ENCODE measurements at regions of chr3 and their contacts with region 1.

Region 1: DNA sequence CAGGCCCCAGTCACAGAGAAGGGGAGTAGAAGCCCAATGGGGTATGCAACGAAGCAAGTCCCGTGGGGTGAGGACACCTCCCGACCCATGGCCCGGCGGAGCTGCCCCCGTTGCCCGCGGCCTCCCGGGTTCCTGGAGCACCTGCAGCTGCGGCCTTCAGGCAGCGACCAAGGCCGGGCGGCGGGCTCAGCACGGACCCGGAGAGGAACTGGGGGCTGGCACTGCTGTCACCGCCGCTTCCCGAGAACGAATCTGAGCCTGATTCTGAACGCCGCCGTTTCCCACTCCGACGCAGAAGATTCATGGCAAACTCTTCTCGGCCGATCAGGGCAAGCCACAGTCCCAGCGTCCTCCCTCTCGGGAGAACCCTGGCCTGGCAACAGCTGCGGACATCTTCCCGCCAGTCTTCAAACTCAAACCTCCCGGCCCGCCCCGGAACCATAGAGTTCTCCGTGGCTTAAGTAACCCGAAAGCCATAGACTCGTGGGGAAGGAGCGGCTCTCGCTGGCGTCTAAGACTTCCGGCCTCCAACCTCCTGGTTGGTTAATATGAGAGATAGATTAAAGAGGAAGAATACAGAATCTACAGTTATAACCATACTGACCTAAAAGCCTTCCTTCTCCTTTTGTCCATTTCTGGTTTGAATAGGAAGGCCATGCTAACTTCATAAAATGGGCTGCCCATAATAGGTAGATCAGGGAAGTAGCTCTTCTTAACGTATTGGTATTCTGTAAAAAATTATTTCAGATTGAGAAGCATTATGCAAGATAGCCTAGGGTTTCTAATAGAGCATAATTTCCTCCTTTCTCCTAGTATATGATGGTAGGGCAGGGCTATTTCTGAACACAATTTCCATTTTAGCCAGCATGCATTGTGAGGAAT is at the start of gene POLQ:
- DNase-seq: peak; percentile 74
- ATAC-seq: peak; percentile 91
- H3K4me3 Mint-ChIP-seq: peak within 1 kb of the TSS; percentile 90
- H3K27ac Mint-ChIP-seq: peak within 1 kb of the TSS; percentile 95
- H3K4me1 Mint-ChIP-seq: peaks cover 31% of the 10 kb centered on the region
- H3K27me3 Mint-ChIP-seq: no peaks in the 10 kb centered on the region
- CTCF ChIP-seq: no peak
- total RNA-seq, gene POLQ: 1.4 and 2.7 TPM in 2 replicates

Region 2: DNA sequence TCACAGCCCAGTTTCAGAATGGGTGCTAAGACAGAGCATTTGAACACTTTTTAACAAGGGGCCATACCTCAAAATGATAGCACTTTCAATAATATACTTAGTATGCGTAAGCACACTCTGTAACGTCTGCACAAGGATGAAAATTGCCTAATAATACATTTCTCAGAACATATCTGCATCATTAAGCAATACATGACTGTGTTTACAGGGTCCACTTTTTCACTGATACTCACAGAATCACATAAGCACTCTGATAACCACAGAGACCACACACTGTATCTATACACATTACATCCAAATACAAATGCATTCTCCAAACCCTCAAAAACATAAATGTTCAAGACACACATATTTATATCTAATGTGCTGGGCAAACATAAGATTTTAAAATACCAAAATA is 1684.1 kb before region 1 on chr3:
- CTCF ChIA-PET with region 1: no interaction called
- POLR2A ChIA-PET with region 1: no interaction called
- intact Hi-C with region 1: no loop called
- DNase-seq: no peak
- ATAC-seq: no peak
- H3K4me3 Mint-ChIP-seq: no peak overlapping the region
- H3K27ac Mint-ChIP-seq: no peak overlapping the region
- H3K4me1 Mint-ChIP-seq: no peaks in the 10 kb centered on the region
- H3K27me3 Mint-ChIP-seq: no peaks in the 10 kb centered on the region
- CTCF ChIP-seq: no peak

Region 3: DNA sequence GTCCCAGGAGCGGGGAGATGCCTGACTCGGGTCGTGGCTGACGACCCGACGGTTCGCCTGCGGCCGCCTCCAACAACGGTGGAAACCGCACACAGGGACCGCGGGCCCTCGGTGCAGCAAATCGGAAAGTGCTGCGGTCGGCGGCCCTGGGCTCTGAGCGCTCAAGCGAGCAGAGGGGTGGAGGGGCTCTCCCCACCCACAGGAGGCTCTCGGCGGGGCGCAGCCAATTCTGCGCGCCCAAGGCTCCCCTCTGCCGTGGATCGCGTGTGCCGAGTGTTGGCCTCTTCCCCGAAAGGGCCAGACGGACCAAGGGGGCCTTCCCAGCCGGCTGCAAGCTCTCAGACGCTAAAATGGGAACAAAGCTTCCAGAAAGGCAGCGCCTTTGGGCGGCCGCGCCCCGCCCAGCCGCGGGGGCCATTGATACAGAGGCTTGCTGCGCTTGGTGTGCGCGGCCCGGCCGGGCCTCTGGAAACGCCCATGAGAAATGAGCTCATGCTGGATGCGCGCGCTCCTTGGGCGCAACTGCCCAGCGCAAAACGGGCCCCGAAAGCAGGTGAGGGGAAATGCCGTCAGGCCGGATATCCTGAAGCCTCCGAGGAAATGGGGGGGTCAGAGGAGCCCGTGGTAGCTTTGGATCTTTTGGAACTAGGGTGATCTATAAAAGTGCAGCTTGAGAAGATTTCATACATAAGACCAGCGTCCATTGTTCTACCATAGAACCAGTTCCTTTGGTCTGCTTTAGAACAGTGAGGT is 1450.4 kb before region 1 on chr3:
- CTCF ChIA-PET with region 1: no interaction called
- POLR2A ChIA-PET with region 1: no interaction called
- intact Hi-C with region 1: loop called (anchors 5 kb)
- DNase-seq: peak; percentile 85
- ATAC-seq: peak; percentile 20
- H3K4me3 Mint-ChIP-seq: no peak overlapping the region
- H3K27ac Mint-ChIP-seq: no peak overlapping the region
- H3K4me1 Mint-ChIP-seq: peaks cover 12% of the 10 kb centered on the region
- H3K27me3 Mint-ChIP-seq: no peaks in the 10 kb centered on the region
- CTCF ChIP-seq: no peak

Region 4: GRCh38 chr3:121855555-121855954 is 309.7 kb after region 1 on chr3:
- CTCF ChIA-PET with region 1: interaction called, 9 read pairs
- POLR2A ChIA-PET with region 1: no interaction called
- intact Hi-C with region 1: loop called (anchors 2 kb)
- DNase-seq: no peak
- ATAC-seq: peak; percentile 42
- H3K4me3 Mint-ChIP-seq: no peak overlapping the region
- H3K27ac Mint-ChIP-seq: no peak overlapping the region
- H3K4me1 Mint-ChIP-seq: peaks cover 32% of the 10 kb centered on the region
- H3K27me3 Mint-ChIP-seq: no peaks in the 10 kb centered on the region
- CTCF ChIP-seq: no peak

Region 5: GRCh38 chr3:122258757-122259371 is 713.0 kb after region 1 on chr3:
- CTCF ChIA-PET with region 1: interaction called, 17 read pairs
- POLR2A ChIA-PET with region 1: interaction called, 5 read pairs
- intact Hi-C with region 1: loop called (anchors 1 kb)
- DNase-seq: peak; percentile 55
- ATAC-seq: peak; percentile 96
- H3K4me3 Mint-ChIP-seq: no peak overlapping the region
- H3K27ac Mint-ChIP-seq: no peak overlapping the region
- H3K4me1 Mint-ChIP-seq: peaks cover 16% of the 10 kb centered on the region
- H3K27me3 Mint-ChIP-seq: no peaks in the 10 kb centered on the region
- CTCF ChIP-seq: peak; percentile 31

Region 6: DNA sequence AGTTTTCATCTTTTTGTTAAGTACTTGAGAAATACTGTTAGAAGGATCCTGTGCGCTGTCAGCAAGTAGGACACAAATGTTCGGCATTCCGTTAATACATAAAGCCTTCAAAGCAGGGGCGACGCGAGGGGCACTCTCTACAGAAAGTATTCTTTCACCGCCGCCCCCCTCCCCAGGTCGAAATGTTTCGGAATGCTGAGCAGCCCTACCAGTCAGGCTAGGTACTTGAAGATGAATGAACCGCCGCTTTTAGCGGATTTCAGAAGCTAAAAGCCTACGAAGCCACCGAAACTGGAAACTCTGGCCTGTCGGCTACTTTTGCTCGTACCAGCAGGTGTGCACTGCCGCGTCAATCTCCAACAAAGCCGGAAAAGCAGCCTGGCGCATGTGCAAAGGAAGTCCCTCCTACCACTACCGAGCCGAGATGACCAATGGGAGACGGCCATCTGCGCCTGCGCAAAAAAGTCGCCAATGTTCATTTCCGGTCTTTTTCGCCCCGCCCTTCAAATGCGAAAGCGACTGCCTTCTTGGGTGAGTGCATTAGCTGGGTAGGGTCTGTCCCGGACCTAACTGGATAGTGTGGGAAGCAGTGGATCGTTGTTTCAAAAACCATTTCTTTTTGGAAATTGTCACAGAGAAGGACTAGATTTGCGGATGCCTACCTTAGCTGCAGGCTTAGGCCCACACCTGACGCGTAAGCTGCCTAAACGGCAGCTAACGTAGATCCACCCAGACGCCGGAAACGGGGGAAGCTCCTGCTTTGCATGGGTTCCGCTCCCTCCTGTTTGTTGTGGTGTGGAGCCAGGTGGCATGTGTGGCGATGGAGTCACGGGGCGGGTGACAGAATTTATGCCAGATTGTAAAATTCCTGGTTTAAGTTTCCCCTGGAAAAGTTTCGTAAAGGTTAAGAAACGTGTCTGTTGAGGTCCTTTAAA is 870.2 kb after region 1 on chr3 and contains the start of gene WDR5B:
- CTCF ChIA-PET with region 1: no interaction called
- POLR2A ChIA-PET with region 1: interaction called, 5 read pairs
- intact Hi-C with region 1: loop called (anchors 1 kb)
- DNase-seq: peak; percentile 95
- ATAC-seq: peak; percentile 89
- H3K4me3 Mint-ChIP-seq: peak within 1 kb of the TSS; percentile 98
- H3K27ac Mint-ChIP-seq: peak within 1 kb of the TSS; percentile 100
- H3K4me1 Mint-ChIP-seq: peaks cover 46% of the 10 kb centered on the region
- H3K27me3 Mint-ChIP-seq: no peaks in the 10 kb centered on the region
- CTCF ChIP-seq: no peak
- total RNA-seq, gene WDR5B: 8.0 and 8.1 TPM in 2 replicates

Region 7: GRCh38 chr3:122793568-122794416 is 1248.0 kb after region 1 on chr3 and contains the start of gene HSPBAP1:
- CTCF ChIA-PET with region 1: no interaction called
- POLR2A ChIA-PET with region 1: no interaction called
- intact Hi-C with region 1: loop called (anchors 1 kb)
- DNase-seq: peak; percentile 91
- ATAC-seq: peak; percentile 67
- H3K4me3 Mint-ChIP-seq: no peak within 1 kb of the TSS
- H3K27ac Mint-ChIP-seq: peak within 1 kb of the TSS; percentile 86
- H3K4me1 Mint-ChIP-seq: peaks cover 30% of the 10 kb centered on the region
- H3K27me3 Mint-ChIP-seq: no peaks in the 10 kb centered on the region
- CTCF ChIP-seq: no peak
- total RNA-seq, gene HSPBAP1: 18.1 and 20.6 TPM in 2 replicates